Posterior vena cava (tissue), 2 donors: ENCODE measurements at regions of chr1 and their contacts with region 1.

Region 1: GRCh38 chr1:1906185-1907097 is 8.6 kb upstream of the CALML6 start:
- DNase-seq: peak; percentile 95

Region 2: GRCh38 chr1:1185101-1185765 is 721.2 kb before region 1 on chr1:
- intact Hi-C with region 1: no loop called
- DNase-seq: no peak

Region 3: DNA sequence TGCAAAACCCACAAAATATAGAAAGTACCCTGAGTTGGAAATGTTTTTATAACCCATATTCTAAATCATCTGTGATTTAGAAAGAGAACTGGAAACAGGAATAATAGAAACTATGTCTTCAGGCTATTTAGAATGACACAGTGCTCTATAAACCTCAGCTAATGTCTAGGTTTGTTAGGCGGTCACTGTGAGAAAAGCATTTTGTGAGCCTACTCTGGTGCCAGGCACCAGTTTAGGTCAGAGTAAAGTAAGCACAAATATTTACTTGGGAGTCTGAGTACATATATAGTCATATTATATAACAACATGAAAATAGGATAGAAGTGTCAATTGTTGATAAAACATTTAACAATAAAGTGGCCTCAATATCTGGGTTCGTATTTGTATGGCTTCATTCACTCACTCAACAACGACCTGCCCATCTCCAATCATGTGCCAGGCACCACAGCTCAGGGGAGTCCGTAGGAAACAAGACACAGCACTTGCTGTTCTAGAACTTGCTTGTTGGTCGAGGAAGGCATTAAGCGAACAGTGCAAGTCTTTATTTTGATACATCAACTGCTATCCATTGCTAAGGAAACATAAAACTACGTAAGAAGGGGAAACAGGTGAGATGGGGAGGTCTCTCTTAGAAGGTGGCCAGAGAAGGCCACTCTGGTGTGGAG is 52.7 kb before region 1 on chr1:
- intact Hi-C with region 1: loop called in 1 of 2 experiments (anchors 2 kb)
- DNase-seq: no peak

Region 4: GRCh38 chr1:3333903-3334302 is 1427.5 kb after region 1 on chr1:
- intact Hi-C with region 1: no loop called
- DNase-seq: no peak